Left cardiac atrium (tissue), 4 donors: ENCODE measurements at regions of chr1 and their contacts with region 1.

Region 1: DNA sequence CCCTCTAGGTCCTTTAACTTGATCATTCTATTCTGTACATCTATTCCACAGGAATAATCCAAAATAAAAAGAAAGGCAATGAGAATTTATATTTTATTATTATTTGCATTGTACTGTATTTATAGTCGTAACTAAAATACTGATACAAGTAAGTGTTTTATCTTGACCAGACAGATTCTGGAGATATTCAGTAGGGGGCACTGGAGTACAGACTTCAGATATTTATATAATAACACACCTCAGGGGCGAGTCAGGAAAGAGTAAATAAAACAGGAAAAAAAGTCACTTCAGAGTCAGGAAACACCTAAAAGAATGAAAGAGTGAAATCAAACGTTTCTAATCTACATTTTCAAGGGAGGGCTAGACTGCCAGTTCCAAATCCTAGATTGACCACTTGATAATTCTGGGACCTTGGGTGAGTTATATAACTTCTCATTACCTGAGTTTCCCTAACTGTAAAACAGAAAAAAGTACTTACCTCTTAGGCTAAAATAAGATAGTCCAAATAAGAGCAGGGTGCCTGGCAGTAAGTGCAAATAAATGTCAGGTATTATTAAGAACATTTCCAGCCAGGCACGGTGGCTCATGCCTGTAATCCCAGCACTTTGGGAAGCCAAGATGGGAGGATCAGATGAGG is 31.1 kb upstream of the MTF1 start:
- DNase-seq: no peak
- ATAC-seq: peak in 1 of 2 donors; percentile 29

Region 2: GRCh38 chr1:37958690-37959089 is 68.2 kb after region 1 on chr1:
- intact Hi-C with region 1: loop called in 1 of 2 experiments (anchors 10 kb)
- DNase-seq: no peak
- ATAC-seq: no peak

Region 3: GRCh38 chr1:37978541-37978940 is 88.0 kb after region 1 on chr1:
- intact Hi-C with region 1: loop called (anchors 5 kb)
- DNase-seq: no peak
- ATAC-seq: no peak

Region 4: DNA sequence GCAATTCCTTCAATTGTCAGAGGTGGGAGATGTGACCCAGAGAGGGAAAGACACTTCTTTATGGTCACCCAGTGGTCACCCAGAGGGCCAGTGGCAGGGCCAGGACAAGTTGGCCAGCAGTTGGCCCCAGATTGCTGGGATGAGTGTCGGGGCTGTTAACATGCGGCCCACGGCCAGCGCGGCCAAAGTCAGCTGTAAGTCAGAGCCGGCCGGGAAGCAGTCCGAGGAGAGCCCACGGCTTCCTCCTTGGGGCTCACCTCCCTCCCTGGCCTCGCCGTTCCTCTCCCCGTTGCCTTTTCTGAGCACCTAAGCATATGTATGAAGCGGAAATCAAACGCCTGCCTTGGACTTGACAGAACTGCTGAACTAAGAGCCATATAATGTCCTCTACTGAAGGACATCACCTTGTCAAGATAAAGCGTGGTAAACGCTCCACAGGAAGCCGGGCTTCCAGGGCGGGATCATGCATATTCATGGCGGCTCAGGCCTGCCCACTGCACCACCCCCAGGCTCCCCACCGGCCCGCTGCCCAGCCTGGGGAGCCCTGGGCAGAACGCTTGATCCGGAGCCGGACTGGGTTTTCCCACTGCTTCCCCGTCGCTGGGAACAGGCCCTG is 401.5 kb after region 1 on chr1:
- intact Hi-C with region 1: no loop called
- DNase-seq: peak; percentile 37
- ATAC-seq: peak in 1 of 2 donors; percentile 75